Posterior vena cava (tissue), 2 donors: ENCODE measurements at regions of chr3 and their contacts with region 1.

Region 1: GRCh38 chr3:127490271-127491023 is 100.1 kb downstream of the TPRA1 start:
- DNase-seq: no peak

Region 2: GRCh38 chr3:126142652-126143051 is 1347.8 kb before region 1 on chr3:
- intact Hi-C with region 1: loop called in 1 of 2 experiments (anchors 5 kb)
- DNase-seq: no peak

Region 3: DNA sequence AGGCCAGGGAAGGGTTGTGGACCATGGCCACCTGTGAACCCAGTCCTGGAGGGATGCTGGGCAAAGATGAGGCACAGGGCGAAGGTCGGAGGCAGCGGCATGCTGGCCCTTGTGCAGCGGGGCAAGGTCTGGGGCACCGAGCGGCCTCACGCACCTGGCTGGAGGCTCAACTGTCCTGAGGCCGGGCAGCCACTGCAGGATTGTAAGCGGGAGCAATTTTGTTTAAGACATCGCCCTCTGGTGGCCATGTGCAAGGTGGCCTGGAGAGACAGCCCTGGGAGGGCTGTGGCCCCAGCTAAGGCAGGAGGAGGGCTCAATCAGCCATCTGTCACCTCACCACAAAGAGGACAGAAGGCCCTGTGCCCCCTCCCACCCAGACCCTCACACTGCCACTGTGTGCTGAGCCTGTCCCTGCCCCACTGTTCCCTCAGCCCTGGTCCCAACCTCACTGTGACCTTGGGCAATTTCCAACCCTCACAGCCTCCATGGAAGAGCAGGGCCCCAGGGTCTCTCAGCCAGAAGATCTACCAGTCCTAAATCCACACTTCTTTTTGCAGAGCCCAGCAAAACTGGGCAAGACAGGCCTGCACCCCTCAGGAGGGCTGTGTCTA is 53.9 kb after region 1 on chr3:
- intact Hi-C with region 1: no loop called
- DNase-seq: peak; percentile 91

Region 4: GRCh38 chr3:128170805-128171516 is 680.5 kb after region 1 on chr3:
- intact Hi-C with region 1: loop called in 1 of 2 experiments (anchors 5 kb)
- DNase-seq: no peak

Region 5: GRCh38 chr3:129490242-129491045 is 2000.0 kb after region 1 on chr3:
- intact Hi-C with region 1: no loop called
- DNase-seq: peak; percentile 96